Activated naive CD4-positive, alpha-beta T cell treated with anti-CD3 and anti-CD28 coated beads for 36 hours (primary cell): ENCODE measurements at regions of chr7 and their contacts with region 1.

Region 1: GRCh38 chr7:107563775-107564552 is at the starts of genes COG5 and DUS4L:
- DNase-seq: peak; percentile 87
- H3K4me3 Mint-ChIP-seq: peak within 1 kb of the TSS; percentile 82
- H3K27ac Mint-ChIP-seq: peak within 1 kb of the TSS; percentile 92
- H3K4me1 Mint-ChIP-seq: peaks cover 61% of the 10 kb centered on the region
- H3K27me3 Mint-ChIP-seq: no peaks in the 10 kb centered on the region
- total RNA-seq, gene COG5: 52.0 to 62.8 TPM
- total RNA-seq, gene DUS4L: 10.8 to 12.3 TPM

Region 2: DNA sequence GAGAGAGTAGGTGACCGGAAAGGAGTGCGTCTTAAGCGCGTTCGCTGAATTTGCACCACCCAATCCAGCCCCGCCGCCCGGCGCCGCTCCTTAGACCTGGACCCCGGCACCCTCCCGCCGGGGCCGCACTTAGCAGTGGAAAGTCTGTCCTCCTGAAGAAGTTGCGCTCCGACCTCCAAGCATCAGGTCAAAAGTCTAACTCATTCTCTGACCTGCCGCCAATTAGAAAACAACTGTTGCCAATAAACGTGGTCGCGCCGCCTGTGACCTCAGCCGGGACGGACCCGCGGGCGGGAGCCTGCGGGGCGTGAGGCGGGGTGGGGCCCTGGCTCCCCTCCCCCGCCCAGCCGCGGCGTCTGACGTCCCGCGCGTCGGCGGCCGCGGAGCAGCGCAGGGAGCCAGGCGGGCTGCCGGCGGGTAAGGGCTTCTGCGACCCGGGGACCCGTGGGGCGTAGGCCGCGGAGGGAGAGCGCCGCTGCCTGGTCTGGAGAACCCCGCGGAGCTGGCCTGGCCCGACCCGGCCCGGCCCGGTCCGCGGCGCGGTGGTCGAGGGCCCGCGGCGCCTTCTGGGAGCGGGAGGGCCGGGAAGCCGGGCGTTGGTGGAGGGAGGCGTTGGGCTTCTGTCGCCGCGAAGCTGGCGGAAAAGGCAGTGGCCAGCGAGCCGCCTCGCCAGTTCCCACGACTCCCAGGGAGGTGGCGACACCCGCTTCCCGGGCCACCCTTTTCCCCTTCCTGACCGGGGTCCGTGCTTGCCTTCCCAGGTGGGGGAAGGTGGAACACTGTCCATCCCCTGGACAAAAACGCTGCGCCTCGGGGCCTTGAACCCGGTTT is 16.1 kb after region 1 on chr7 and contains the start of gene BCAP29:
- CTCF ChIA-PET with region 1: interaction called, 4 read pairs
- intact Hi-C with region 1: loop called (anchors 1 kb)
- DNase-seq: peak; percentile 64
- H3K4me3 Mint-ChIP-seq: peak within 1 kb of the TSS; percentile 85
- H3K27ac Mint-ChIP-seq: peak within 1 kb of the TSS; percentile 71
- H3K4me1 Mint-ChIP-seq: peaks cover 21% of the 10 kb centered on the region
- H3K27me3 Mint-ChIP-seq: no peaks in the 10 kb centered on the region
- total RNA-seq, gene BCAP29: 18.9 to 21.0 TPM

Region 3: DNA sequence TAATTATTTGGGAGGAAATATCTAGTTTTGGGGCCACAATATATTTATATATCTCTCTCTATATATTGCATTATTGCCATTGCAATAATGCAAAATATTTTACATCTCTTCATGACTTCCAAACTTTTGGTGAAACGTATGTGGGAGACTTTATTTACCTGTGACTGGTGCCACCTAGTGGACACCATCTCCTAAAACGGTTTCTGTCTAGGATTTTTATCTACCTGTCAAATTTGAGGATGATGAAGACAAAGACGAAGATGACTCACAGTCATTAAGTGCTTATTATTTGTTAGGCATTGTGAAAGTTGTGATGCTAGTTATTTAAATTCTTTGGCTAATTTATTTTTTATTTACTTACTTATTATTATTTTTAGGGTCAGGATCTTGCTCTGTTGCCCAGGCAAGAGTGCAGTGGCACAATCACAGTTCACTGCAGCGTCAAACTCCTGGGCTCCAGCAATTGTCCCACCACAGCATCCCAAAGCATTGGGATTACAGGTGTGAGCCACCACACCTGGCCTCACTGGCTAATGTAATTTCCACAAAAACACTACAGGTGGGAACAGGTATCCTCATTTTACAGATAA is 161.3 kb after region 1 on chr7:
- CTCF ChIA-PET with region 1: no interaction called
- intact Hi-C with region 1: loop called (anchors 1 kb)
- DNase-seq: peak; percentile 75
- H3K4me3 Mint-ChIP-seq: no peak overlapping the region
- H3K27ac Mint-ChIP-seq: no peak overlapping the region
- H3K4me1 Mint-ChIP-seq: no peaks in the 10 kb centered on the region
- H3K27me3 Mint-ChIP-seq: peaks cover 26% of the 10 kb centered on the region

Region 4: GRCh38 chr7:107890962-107891635 is 327.1 kb after region 1 on chr7 and contains the start of gene DLD:
- CTCF ChIA-PET with region 1: no interaction called
- intact Hi-C with region 1: loop called (anchors 2 kb)
- DNase-seq: peak; percentile 96
- H3K4me3 Mint-ChIP-seq: peak within 1 kb of the TSS; percentile 100
- H3K27ac Mint-ChIP-seq: peak within 1 kb of the TSS; percentile 98
- H3K4me1 Mint-ChIP-seq: peaks cover 37% of the 10 kb centered on the region
- H3K27me3 Mint-ChIP-seq: no peaks in the 10 kb centered on the region
- total RNA-seq, gene DLD: 92.6 to 96.8 TPM